Thyroid gland (tissue), 4 donors: ENCODE measurements at regions of chr1 and their contacts with region 1.

Region 1: DNA sequence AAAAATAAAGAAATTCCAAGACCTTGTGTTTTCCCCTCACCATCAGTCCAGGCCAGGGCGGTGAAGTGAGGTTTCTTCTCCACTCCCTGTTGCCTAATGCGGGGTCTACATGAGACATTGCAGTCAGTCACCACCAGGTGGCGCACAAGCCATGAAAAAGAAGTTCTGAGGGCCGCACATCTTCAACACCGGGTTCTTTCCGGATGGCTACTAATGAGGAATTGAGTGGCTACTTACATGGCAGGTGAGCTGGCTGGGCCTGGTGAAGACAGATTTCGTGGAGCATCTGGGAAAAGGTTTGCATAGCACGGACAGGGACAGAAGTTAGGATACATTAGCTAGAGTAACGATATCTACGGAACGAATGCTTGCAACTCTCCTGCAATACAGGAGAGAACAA is 15.8 kb upstream of the S100A11 start:
- DNase-seq: peak; percentile 90 to 95
- H3K4me3 ChIP-seq: no peak overlapping the region
- H3K27ac ChIP-seq: no peak overlapping the region
- H3K4me1 ChIP-seq: peaks cover 13 to 14% of the 10 kb centered on the region in 2 donors
- H3K27me3 ChIP-seq: no peaks in the 10 kb centered on the region
- CTCF ChIP-seq: peak; percentile 80 to 96 (median 90)
- POLR2A ChIP-seq: no peak

Region 2: GRCh38 chr1:152013664-152014237 is 38.9 kb before region 1 on chr1:
- intact Hi-C with region 1: no loop called
- DNase-seq: peak; percentile 53 to 57
- H3K4me3 ChIP-seq: no peak overlapping the region
- H3K27ac ChIP-seq: no peak overlapping the region
- H3K4me1 ChIP-seq: no peaks in the 10 kb centered on the region
- H3K27me3 ChIP-seq: no peaks in the 10 kb centered on the region
- CTCF ChIP-seq: peak in 4 of 6 experiments; percentile 20 to 64 (median 40)
- POLR2A ChIP-seq: no peak

Region 3: GRCh38 chr1:152141974-152142584 is 89.5 kb after region 1 on chr1:
- intact Hi-C with region 1: loop called (anchors 10 kb)
- DNase-seq: peak; percentile 71 to 77
- H3K4me3 ChIP-seq: no peak overlapping the region
- H3K27ac ChIP-seq: no peak overlapping the region
- H3K4me1 ChIP-seq: no peaks in the 10 kb centered on the region
- H3K27me3 ChIP-seq: no peaks in the 10 kb centered on the region
- CTCF ChIP-seq: peak; percentile 38 to 90 (median 76)
- POLR2A ChIP-seq: no peak

Region 4: DNA sequence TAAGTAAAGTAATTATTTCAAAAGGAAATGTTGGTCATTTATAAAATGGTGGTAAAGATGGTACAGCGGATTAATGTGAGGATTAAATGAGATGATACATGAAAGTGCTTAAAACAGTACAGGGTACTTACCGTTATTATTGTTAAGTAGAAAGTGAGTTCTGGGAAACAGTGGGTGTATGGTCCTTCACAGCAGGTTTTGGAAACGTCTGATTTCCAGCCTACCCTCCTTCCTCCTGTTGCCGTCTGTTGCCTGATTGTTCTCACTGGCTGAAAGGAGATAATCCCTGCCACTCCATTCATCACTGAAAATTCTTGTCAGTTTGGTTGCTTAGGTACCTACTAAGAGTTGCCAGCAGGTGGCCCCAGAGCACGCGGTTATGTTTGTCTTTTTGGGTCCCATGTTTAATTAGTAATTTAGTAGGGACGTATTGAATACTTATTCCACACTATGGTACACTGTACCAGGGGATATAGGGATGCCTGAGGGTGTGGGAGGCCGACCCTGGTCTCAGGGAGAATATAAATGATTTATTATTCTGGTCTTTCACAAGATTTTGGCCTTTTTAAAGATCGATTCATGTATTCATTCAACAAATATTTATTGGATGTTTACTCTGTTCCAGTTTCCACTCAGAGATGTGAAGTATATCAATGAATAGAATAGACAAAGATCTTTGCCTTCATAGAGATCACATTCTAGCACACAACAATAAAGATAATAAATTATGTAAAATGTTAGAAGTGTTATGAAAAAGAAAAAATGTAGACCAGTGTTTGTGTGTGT is 137.2 kb after region 1 on chr1:
- intact Hi-C with region 1: loop called (anchors 2 kb)
- DNase-seq: peak; percentile 65 to 68
- H3K4me3 ChIP-seq: peak overlapping the region in 2 of 3 donors; percentile 16 to 36
- H3K27ac ChIP-seq: no peak overlapping the region
- H3K4me1 ChIP-seq: peaks cover 0 to 4% of the 10 kb centered on the region in 2 donors
- H3K27me3 ChIP-seq: no peaks in the 10 kb centered on the region
- CTCF ChIP-seq: peak; percentile 19 to 76 (median 62)
- POLR2A ChIP-seq: no peak

Region 5: DNA sequence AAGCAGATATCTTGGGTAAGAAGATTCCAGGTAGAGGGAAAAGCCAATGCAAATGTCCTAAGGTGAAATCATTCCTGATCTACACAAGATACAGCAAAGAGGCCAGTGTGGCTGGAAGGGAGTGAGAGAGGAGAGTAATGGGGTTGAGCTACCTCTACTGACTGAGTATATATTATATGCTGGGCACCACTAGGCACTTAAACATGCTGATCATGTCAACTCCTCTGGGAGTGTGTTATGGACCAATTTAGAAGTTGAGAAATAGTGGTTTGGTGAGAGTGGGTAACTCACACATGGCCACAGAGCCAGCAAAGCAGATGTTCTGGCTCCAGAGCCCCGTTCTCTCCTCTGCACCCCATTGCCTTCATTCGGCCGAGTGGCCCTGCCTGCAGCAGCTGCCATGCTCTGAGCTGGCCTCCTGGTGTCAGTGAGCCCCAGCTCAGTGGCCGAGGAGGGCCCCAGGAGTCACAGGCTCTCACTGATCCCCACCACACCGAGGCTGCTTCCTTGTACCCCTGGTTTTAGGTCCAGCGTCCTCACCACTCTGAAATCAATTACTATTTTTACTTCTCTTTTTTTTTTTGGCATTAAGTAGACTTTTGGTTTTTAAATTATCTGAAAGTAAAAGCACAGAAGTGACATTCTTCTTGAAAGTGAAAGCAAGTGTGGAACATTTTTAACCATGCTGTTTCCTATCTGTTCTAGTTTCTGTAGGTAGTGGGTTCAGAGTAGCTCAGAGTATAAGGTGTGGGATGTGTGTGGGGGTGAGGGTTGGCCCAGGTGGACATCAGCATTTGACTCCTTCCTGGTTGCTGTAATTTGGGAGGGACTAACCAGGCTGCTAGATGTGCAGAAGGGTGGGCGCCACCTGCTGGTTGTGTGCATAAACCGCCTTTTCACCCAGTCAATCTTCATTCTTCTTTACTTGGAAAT is 407.3 kb after region 1 on chr1:
- intact Hi-C with region 1: loop called (anchors 10 kb)
- DNase-seq: peak; percentile 61 to 72
- H3K4me3 ChIP-seq: no peak overlapping the region
- H3K27ac ChIP-seq: no peak overlapping the region
- H3K4me1 ChIP-seq: no peaks in the 10 kb centered on the region
- H3K27me3 ChIP-seq: no peaks in the 10 kb centered on the region
- CTCF ChIP-seq: peak; percentile 14 to 75 (median 42)
- POLR2A ChIP-seq: no peak